ENCODE measurements at regions of chr1 and their contacts with region 1.

Region 1: GRCh38 chr1:219324629-219325367 is 151.1 kb downstream of the LYPLAL1 start:
- DNase-seq: peak; percentile 83
- H3K4me3 ChIP-seq: no peak overlapping the region
- H3K27ac ChIP-seq: peak overlapping the region; percentile 78
- H3K4me1 ChIP-seq: peaks cover 44% of the 10 kb centered on the region
- H3K27me3 ChIP-seq: no peaks in the 10 kb centered on the region
- CTCF ChIP-seq: no peak
- POLR2A ChIP-seq: peak; percentile 63

Region 2: DNA sequence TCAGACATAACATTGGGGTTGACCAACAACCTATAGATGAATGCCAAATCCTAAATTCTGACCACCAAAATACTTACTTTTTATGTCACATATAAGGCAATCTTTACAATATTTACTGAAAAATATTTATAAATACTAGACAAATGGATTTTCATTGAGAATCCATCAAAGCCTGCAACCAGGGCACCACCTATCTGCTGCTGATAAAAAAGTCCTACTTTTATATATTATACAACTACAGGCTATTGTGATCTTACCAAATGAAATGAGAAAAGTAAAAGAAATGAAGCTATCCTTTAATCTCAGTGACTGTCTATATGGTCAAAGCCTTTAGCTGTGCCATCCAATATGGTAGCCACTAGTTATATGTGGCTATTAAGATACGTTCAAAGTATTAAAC is 1745.2 kb before region 1 on chr1:
- CTCF ChIA-PET with region 1: no interaction called
- POLR2A ChIA-PET with region 1: no interaction called
- dilution Hi-C with region 1: no loop called
- intact Hi-C with region 1: no loop called
- DNase-seq: no peak
- H3K4me3 ChIP-seq: no peak overlapping the region
- H3K27ac ChIP-seq: no peak overlapping the region
- H3K4me1 ChIP-seq: no peaks in the 10 kb centered on the region
- H3K27me3 ChIP-seq: no peaks in the 10 kb centered on the region
- CTCF ChIP-seq: no peak
- POLR2A ChIP-seq: no peak

Region 3: DNA sequence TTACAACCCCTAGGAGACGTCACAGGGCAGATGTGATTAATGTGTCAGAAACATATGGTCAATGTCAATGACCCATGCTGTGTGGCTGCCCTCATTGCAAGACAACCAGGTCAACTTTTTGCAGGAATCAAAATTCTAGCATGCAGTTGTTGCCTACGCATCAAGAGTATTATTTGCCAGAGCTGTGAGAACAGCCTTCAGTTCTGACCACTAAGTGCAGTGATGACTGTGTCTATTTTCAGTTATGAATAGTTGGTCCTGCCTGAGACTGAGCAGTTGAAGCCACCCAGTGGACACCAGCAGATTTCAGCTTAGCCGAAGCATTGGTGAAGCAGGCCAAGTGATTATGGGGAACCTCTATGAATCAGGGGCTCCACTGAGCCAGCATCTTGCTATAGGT is 103.9 kb before region 1 on chr1:
- CTCF ChIA-PET with region 1: no interaction called
- POLR2A ChIA-PET with region 1: no interaction called
- dilution Hi-C with region 1: no loop called
- intact Hi-C with region 1: no loop called
- DNase-seq: no peak
- H3K4me3 ChIP-seq: no peak overlapping the region
- H3K27ac ChIP-seq: no peak overlapping the region
- H3K4me1 ChIP-seq: no peaks in the 10 kb centered on the region
- H3K27me3 ChIP-seq: no peaks in the 10 kb centered on the region
- CTCF ChIP-seq: no peak
- POLR2A ChIP-seq: no peak

Region 4: GRCh38 chr1:219235903-219236481 is 88.8 kb before region 1 on chr1:
- CTCF ChIA-PET with region 1: no interaction called
- POLR2A ChIA-PET with region 1: no interaction called
- dilution Hi-C with region 1: no loop called
- intact Hi-C with region 1: no loop called
- DNase-seq: no peak
- H3K4me3 ChIP-seq: no peak overlapping the region
- H3K27ac ChIP-seq: no peak overlapping the region
- H3K4me1 ChIP-seq: no peaks in the 10 kb centered on the region
- H3K27me3 ChIP-seq: no peaks in the 10 kb centered on the region
- CTCF ChIP-seq: no peak
- POLR2A ChIP-seq: no peak

Region 5: DNA sequence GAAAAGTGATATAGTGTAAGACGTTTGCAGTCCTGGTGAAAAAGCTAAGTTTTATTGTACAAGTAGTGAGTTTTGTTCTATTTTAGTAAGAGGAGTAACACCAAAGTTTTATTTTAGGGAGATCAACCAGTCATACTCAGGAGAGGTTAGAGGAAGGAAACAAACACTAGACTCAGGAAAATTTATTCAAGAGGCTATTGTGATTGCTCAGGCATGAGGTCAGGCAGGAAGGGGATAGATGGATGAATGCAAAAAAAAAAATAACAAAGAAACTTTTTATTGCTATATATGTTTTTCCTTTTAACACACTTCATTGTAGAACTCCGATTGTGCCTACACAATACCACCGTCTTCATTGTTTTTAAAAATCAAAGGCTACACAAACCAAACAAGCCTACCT is 37.9 kb after region 1 on chr1:
- CTCF ChIA-PET with region 1: interaction called, 4 read pairs
- POLR2A ChIA-PET with region 1: no interaction called
- dilution Hi-C with region 1: no loop called
- intact Hi-C with region 1: loop called (anchors 1 kb)
- DNase-seq: peak; percentile 64
- H3K4me3 ChIP-seq: no peak overlapping the region
- H3K27ac ChIP-seq: peak overlapping the region; percentile 34
- H3K4me1 ChIP-seq: peaks cover 17% of the 10 kb centered on the region
- H3K27me3 ChIP-seq: no peaks in the 10 kb centered on the region
- CTCF ChIP-seq: no peak
- POLR2A ChIP-seq: no peak

Region 6: GRCh38 chr1:219405531-219406331 is 80.9 kb after region 1 on chr1:
- CTCF ChIA-PET with region 1: no interaction called
- POLR2A ChIA-PET with region 1: no interaction called
- dilution Hi-C with region 1: no loop called
- intact Hi-C with region 1: no loop called
- DNase-seq: no peak
- H3K4me3 ChIP-seq: no peak overlapping the region
- H3K27ac ChIP-seq: no peak overlapping the region
- H3K4me1 ChIP-seq: no peaks in the 10 kb centered on the region
- H3K27me3 ChIP-seq: no peaks in the 10 kb centered on the region
- CTCF ChIP-seq: no peak
- POLR2A ChIP-seq: no peak

Measured in endothelial cell of umbilical vein (primary cell).